Panc1 (cell line): ENCODE measurements at regions of chr10 and their contacts with region 1.

Region 1: GRCh38 chr10:114932945-114933344 is 5.0 kb upstream of the TRUB1 start:
- DNase-seq: no peak
- ATAC-seq: no peak
- H3K4me3 ChIP-seq: no peak overlapping the region
- H3K27ac ChIP-seq: no peak overlapping the region
- H3K4me1 ChIP-seq: no peaks in the 10 kb centered on the region
- H3K27me3 ChIP-seq: no peaks in the 10 kb centered on the region
- CTCF ChIP-seq: no peak

Region 2: DNA sequence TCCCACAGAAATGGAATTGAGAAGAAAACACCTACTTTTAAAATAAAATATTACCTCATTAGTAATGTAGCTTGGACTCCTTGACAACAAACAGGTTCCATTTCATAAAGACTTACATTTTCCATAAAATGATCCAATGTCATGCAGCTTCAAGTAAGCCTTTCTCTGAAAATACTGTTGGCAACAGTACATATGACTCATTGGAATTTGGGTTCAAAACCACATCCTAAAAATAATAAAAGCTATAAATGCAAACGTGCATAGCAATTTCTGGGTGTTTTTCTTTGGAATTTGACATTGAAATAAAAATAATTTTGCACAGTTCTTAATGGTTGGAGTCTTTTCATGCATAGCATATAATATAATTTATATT is 63.4 kb before region 1 on chr10:
- CTCF ChIA-PET with region 1: no interaction called
- POLR2A ChIA-PET with region 1: no interaction called
- in situ Hi-C with region 1: no loop called
- intact Hi-C with region 1: no loop called
- DNase-seq: no peak
- ATAC-seq: no peak
- H3K4me3 ChIP-seq: no peak overlapping the region
- H3K27ac ChIP-seq: no peak overlapping the region
- H3K4me1 ChIP-seq: no peaks in the 10 kb centered on the region
- H3K27me3 ChIP-seq: no peaks in the 10 kb centered on the region
- CTCF ChIP-seq: no peak

Region 3: DNA sequence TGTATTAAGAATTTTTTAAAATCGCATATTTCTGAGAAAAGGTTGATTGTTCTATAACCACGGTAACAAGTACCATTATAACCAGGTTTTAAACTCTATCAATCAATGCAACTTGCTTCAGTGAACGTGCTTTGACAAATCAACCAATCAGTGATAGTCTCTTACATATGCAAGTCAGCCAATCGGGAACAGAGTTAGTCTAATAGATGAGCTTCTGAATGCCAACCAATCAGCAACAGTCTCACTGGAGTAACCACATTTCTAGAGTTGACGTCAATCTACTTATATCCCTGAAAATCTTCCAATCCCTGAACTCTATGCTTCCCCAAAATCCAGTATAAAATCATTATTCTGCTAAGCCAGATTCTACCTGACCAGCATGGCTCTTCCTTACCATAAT is 39.7 kb before region 1 on chr10:
- CTCF ChIA-PET with region 1: no interaction called
- POLR2A ChIA-PET with region 1: no interaction called
- in situ Hi-C with region 1: no loop called
- intact Hi-C with region 1: loop called (anchors 1 kb)
- DNase-seq: no peak
- ATAC-seq: no peak
- H3K4me3 ChIP-seq: no peak overlapping the region
- H3K27ac ChIP-seq: no peak overlapping the region
- H3K4me1 ChIP-seq: no peaks in the 10 kb centered on the region
- H3K27me3 ChIP-seq: no peaks in the 10 kb centered on the region
- CTCF ChIP-seq: no peak